GM12878 (cell line): ENCODE measurements at regions of chr1 and their contacts with region 1.

Region 1: DNA sequence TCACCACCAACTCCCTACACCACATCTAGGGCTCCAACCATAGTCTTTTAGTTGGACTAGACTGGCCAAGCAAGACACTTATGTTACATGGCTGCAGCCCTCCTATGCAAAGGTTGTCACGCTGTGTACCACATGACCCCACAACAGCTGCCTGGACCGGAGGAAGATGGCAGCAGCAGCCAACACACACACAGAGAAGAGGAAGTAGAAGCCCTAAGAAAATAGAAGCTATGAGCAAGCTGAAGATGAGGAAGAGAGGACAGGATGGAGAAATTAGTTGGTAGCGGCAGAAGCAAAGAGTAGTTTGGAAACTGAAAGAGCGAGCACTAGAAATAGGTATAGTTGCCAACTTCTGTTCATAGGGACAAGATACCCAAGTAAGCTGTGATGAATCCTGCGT is 60.8 kb upstream of the RALGPS2 start:
- DNase-seq: peak; percentile 79
- ATAC-seq: peak; percentile 80
- H3K4me3 ChIP-seq: no peak overlapping the region
- H3K27ac ChIP-seq: no peak overlapping the region
- H3K4me1 ChIP-seq: peaks cover 30% of the 10 kb centered on the region
- H3K27me3 ChIP-seq: no peaks in the 10 kb centered on the region
- CTCF ChIP-seq: no peak
- EP300 ChIP-seq: no peak
- POLR2A ChIP-seq: no peak
- RAD21 ChIP-seq: no peak

Region 2: GRCh38 chr1:178619042-178619927 is 45.0 kb before region 1 on chr1:
- CTCF ChIA-PET with region 1: interaction called, 3 read pairs
- POLR2A ChIA-PET with region 1: interaction called, 3 read pairs
- RAD21 ChIA-PET with region 1: no interaction called
- SMC1A ChIA-PET with region 1: no interaction called
- in situ Hi-C with region 1: loop called (anchors 5 kb)
- intact Hi-C with region 1: no loop called
- DNase-seq: no peak
- ATAC-seq: no peak
- H3K4me3 ChIP-seq: no peak overlapping the region
- H3K27ac ChIP-seq: no peak overlapping the region
- H3K4me1 ChIP-seq: no peaks in the 10 kb centered on the region
- H3K27me3 ChIP-seq: no peaks in the 10 kb centered on the region
- CTCF ChIP-seq: no peak
- EP300 ChIP-seq: no peak
- POLR2A ChIP-seq: no peak
- RAD21 ChIP-seq: no peak

Region 3: DNA sequence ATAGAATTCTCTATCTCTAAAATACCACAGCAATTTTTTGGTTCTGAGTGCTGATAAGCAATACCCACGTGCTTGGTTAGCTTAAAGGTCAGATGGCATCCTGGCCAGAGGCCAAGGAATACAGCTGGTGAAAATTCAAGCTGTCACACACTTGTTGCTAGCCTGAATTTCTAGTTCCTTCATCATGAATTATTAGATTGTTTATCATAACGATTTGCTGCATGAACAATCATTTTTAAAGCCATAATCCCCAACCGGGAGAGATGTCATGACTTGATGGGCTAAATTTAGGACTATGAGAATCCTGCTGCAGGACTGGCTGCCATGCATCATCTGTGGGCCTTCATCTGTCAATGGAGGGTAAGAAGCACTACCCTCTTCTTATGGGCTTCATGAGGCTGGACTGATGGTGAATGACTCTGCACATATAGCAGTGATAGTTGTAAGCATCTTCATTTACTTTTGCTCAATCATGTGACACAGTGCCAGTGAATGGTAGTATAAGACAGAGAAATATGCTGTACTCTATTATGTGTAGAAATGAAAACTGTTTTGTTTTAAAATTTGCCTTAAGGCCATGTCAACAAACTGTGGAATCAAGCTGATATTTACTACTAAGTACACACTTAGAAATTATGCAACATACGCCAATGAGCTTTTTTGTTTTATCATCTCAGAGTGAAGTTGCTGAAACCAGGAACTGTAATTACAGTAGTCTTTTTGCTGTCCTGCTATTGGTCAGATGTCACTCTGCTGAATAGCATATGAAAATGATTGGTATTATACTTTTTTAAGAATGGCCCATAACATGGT is 19.8 kb before region 1 on chr1:
- CTCF ChIA-PET with region 1: interaction called, 5 read pairs
- POLR2A ChIA-PET with region 1: no interaction called
- RAD21 ChIA-PET with region 1: interaction called, 4 read pairs
- SMC1A ChIA-PET with region 1: interaction called, 11 read pairs
- in situ Hi-C with region 1: no loop called
- intact Hi-C with region 1: no loop called
- DNase-seq: no peak
- ATAC-seq: no peak
- H3K4me3 ChIP-seq: no peak overlapping the region
- H3K27ac ChIP-seq: no peak overlapping the region
- H3K4me1 ChIP-seq: peaks cover 3% of the 10 kb centered on the region; the same call in 1 of the 2 replicates
- H3K27me3 ChIP-seq: no peaks in the 10 kb centered on the region
- CTCF ChIP-seq: no peak
- EP300 ChIP-seq: no peak
- POLR2A ChIP-seq: no peak
- RAD21 ChIP-seq: no peak

Region 4: GRCh38 chr1:178702146-178702545 is 37.9 kb after region 1 on chr1:
- CTCF ChIA-PET with region 1: no interaction called
- POLR2A ChIA-PET with region 1: no interaction called
- RAD21 ChIA-PET with region 1: no interaction called
- SMC1A ChIA-PET with region 1: no interaction called
- in situ Hi-C with region 1: no loop called
- intact Hi-C with region 1: no loop called
- DNase-seq: no peak
- ATAC-seq: no peak
- H3K4me3 ChIP-seq: no peak overlapping the region
- H3K27ac ChIP-seq: no peak overlapping the region
- H3K4me1 ChIP-seq: no peaks in the 10 kb centered on the region
- H3K27me3 ChIP-seq: no peaks in the 10 kb centered on the region
- CTCF ChIP-seq: no peak
- EP300 ChIP-seq: no peak
- POLR2A ChIP-seq: no peak
- RAD21 ChIP-seq: no peak

Region 5: DNA sequence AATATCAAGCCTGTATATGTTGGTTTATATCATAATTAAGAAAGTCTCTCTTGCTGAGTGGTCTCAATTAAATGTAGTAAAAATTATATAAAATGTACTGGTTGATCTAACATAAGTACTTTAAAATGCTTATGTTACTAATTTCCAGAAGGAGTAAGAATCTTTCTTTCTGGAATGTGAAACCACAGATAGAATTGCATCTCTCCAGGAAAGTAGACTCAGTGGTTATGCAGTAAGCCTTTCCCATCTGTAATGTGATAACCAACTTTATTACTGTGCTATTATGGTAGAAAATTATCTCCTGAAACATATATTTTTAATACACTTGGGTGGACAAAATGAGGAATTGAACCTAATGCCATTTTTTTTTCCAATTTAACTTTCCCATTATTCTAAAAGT is 51.8 kb after region 1 on chr1:
- CTCF ChIA-PET with region 1: no interaction called
- POLR2A ChIA-PET with region 1: no interaction called
- RAD21 ChIA-PET with region 1: no interaction called
- SMC1A ChIA-PET with region 1: no interaction called
- in situ Hi-C with region 1: no loop called
- intact Hi-C with region 1: no loop called
- DNase-seq: no peak
- ATAC-seq: no peak
- H3K4me3 ChIP-seq: no peak overlapping the region
- H3K27ac ChIP-seq: no peak overlapping the region
- H3K4me1 ChIP-seq: no peaks in the 10 kb centered on the region
- H3K27me3 ChIP-seq: no peaks in the 10 kb centered on the region
- CTCF ChIP-seq: no peak
- EP300 ChIP-seq: no peak
- POLR2A ChIP-seq: no peak
- RAD21 ChIP-seq: no peak

Region 6: GRCh38 chr1:179025125-179025974 is 361.1 kb after region 1 on chr1 and contains the start of gene FAM20B:
- CTCF ChIA-PET with region 1: no interaction called
- POLR2A ChIA-PET with region 1: no interaction called
- RAD21 ChIA-PET with region 1: no interaction called
- SMC1A ChIA-PET with region 1: no interaction called
- in situ Hi-C with region 1: no loop called
- intact Hi-C with region 1: loop called (anchors 10 kb)
- DNase-seq: peak; percentile 59
- ATAC-seq: peak; percentile 89
- H3K4me3 ChIP-seq: peak within 1 kb of the TSS; percentile 72
- H3K27ac ChIP-seq: peak within 1 kb of the TSS; percentile 81
- H3K4me1 ChIP-seq: peaks cover 19% of the 10 kb centered on the region
- H3K27me3 ChIP-seq: no peaks in the 10 kb centered on the region
- CTCF ChIP-seq: no peak
- EP300 ChIP-seq: no peak
- POLR2A ChIP-seq: no peak
- RAD21 ChIP-seq: no peak
- polyA plus RNA-seq, gene FAM20B: 2.4 to 4.0 TPM